Ovary (tissue), 10 donors: ENCODE measurements at regions of chr2 and their contacts with region 1.

Region 1: GRCh38 chr2:129957911-129958310 is 21.6 kb upstream of the RAB6C start:
- DNase-seq: no peak
- H3K4me3 ChIP-seq: no peak overlapping the region
- H3K27ac ChIP-seq: no peak overlapping the region
- H3K4me1 ChIP-seq: no peaks in the 10 kb centered on the region
- H3K27me3 ChIP-seq: no peaks in the 10 kb centered on the region
- CTCF ChIP-seq: no peak
- EP300 ChIP-seq: no peak
- POLR2A ChIP-seq: no peak

Region 2: GRCh38 chr2:129443235-129443864 is 514.6 kb before region 1 on chr2:
- intact Hi-C with region 1: loop called in 1 of 4 experiments (anchors 10 kb)
- DNase-seq: no peak
- H3K4me3 ChIP-seq: no peak overlapping the region
- H3K27ac ChIP-seq: no peak overlapping the region
- H3K4me1 ChIP-seq: no peaks in the 10 kb centered on the region
- H3K27me3 ChIP-seq: no peaks in the 10 kb centered on the region
- CTCF ChIP-seq: no peak
- EP300 ChIP-seq: no peak
- POLR2A ChIP-seq: no peak

Region 3: DNA sequence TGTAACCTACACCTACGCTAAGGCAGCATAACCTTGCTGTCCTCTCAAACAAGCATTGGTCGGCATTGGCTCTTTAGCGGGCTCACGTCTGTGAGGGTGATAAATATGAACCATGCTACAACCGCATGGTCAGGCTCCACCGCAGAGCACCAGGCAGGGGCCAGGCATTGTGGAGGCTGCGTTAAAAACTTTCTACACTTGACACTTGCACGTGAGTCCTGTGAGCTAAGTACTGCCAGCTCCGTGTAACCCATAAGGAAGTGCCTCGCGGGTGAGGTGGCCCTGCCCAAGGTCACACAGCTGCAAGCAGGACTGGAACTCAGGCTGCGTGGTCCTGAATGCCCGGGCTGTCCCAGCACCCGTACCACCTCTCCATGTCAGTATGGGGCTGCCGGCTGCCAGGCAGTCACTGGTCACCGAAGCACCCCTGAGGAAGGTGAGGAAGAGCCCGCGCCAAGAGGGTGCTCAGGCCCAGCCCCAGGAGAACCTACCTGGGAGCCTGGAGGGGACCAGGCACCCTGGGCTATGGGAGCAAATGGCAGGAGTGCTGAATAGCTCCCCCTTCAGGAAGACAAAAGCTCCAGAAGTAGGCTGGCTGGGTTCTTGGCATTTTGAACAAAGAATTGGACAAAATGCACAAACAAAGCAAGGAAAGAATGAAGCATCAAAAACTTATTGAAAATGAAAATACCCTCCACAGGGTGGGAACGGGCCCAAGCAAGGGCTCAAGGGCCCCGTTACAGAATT is 249.5 kb before region 1 on chr2:
- intact Hi-C with region 1: no loop called
- DNase-seq: no peak
- H3K4me3 ChIP-seq: no peak overlapping the region
- H3K27ac ChIP-seq: no peak overlapping the region
- H3K4me1 ChIP-seq: no peaks in the 10 kb centered on the region
- H3K27me3 ChIP-seq: no peaks in the 10 kb centered on the region
- CTCF ChIP-seq: no peak
- EP300 ChIP-seq: no peak
- POLR2A ChIP-seq: no peak

Region 4: DNA sequence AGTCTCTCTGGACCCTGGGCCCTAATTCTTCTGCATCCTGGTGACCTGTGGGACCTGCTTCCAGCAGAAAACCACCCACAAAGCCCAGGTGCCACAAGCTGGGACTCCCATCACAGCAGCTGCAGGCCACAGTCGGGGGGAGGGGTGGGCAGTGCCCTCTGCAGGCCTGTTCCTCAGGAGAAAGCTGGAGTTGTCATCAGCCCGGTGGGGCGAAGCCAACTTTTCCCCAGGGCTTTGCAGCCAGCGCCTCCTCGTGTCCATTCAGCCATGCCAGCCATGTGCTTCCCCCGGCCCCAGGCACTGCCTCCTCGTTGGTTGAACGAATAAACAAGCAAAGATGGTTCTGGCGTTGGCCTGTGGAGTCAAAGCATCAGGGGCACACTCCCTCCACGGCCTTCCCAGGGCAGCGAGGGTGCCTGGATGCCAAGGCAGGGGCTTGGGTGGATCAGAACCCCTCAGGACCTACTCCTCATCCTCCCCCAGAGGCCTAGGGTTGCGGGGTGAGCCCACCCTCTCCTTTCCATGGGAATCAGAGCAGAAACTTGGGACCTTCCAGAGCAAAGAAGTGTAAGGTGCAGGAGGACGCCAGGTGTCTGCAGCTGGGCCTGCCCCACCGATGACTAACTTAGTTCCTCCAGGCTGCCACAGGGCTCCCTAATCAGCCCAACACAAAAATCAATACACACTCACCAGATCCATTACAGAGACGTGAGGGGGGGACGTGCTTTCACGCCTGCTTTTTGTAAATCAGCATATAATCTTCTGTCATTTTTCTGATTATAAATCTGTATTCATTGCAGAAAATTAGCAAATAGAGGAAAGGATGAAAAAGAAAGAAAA is 54.1 kb before region 1 on chr2:
- intact Hi-C with region 1: no loop called
- DNase-seq: no peak
- H3K4me3 ChIP-seq: no peak overlapping the region
- H3K27ac ChIP-seq: no peak overlapping the region
- H3K4me1 ChIP-seq: no peaks in the 10 kb centered on the region
- H3K27me3 ChIP-seq: no peaks in the 10 kb centered on the region
- CTCF ChIP-seq: no peak
- EP300 ChIP-seq: no peak
- POLR2A ChIP-seq: no peak

Region 5: GRCh38 chr2:129913695-129914495 is 44.0 kb before region 1 on chr2:
- intact Hi-C with region 1: no loop called
- DNase-seq: no peak
- H3K4me3 ChIP-seq: no peak overlapping the region
- H3K27ac ChIP-seq: no peak overlapping the region
- H3K4me1 ChIP-seq: no peaks in the 10 kb centered on the region
- H3K27me3 ChIP-seq: no peaks in the 10 kb centered on the region
- CTCF ChIP-seq: no peak
- EP300 ChIP-seq: no peak
- POLR2A ChIP-seq: no peak